Left cardiac atrium (tissue), 4 donors: ENCODE measurements at regions of chr12 and their contacts with region 1.

Region 1: DNA sequence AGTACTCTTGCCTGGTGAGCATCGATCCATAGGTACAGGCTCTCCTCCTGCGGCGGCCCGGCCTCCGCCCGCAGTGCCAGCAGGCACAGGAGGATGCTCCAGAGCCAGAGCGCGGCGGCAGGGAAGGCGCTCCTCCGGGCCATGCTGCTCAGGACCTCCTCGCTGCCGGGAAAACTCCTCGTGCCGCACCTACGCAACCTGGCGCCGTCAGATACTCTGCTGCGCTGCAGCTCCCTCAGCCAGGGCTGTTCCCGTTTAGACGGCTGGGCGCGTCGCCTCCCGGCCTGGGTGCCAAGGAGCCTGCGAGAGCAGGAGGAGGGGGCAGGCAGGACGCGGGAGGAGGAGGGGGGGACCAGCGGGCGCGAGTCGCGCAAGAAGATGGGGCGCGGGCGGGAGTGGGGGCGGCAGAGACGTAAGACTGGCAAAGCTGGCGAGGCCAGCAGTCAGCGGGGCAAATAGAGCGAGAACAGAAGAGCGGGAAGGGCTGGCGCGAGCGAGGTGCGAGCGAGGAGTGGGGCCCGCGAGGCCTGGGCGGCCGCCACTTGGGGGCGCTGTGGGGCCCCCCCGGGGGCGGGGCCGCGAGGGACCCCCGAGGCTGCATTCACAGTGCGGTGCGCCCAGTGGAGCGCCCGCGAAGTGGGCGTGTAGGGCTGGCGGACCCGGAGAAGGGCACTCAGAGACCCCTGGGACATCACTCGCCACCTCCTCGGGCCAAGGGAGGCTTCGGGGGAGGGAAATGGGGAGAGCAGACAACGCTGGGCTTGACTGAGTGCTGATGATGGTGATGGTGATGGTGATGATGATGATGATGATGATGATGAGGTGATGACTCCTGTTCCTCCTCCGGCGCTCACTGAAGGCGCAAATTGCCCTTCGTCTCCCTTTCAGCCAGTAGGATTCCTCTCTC is at the start of gene WIF1:
- DNase-seq: peak; percentile 41
- ATAC-seq: peak; percentile 30 to 57
- total RNA-seq, gene WIF1: 0.91 TPM in 1 of 2 donors, not detected in the other

Region 2: GRCh38 chr12:64780132-64780530 is 341.2 kb before region 1 on chr12:
- intact Hi-C with region 1: no loop called
- DNase-seq: no peak
- ATAC-seq: no peak

Region 3: GRCh38 chr12:64801381-64801780 is 319.9 kb before region 1 on chr12:
- intact Hi-C with region 1: loop called in 1 of 2 experiments (anchors 10 kb)
- DNase-seq: no peak
- ATAC-seq: no peak

Region 4: GRCh38 chr12:65039306-65039705 is 82.0 kb before region 1 on chr12:
- intact Hi-C with region 1: no loop called
- DNase-seq: no peak
- ATAC-seq: no peak

Region 5: GRCh38 chr12:65313719-65314317 is 192.5 kb after region 1 on chr12:
- intact Hi-C with region 1: no loop called
- DNase-seq: no peak
- ATAC-seq: no peak